ENCODE measurements at regions of chr6 and their contacts with region 1.

Region 1: DNA sequence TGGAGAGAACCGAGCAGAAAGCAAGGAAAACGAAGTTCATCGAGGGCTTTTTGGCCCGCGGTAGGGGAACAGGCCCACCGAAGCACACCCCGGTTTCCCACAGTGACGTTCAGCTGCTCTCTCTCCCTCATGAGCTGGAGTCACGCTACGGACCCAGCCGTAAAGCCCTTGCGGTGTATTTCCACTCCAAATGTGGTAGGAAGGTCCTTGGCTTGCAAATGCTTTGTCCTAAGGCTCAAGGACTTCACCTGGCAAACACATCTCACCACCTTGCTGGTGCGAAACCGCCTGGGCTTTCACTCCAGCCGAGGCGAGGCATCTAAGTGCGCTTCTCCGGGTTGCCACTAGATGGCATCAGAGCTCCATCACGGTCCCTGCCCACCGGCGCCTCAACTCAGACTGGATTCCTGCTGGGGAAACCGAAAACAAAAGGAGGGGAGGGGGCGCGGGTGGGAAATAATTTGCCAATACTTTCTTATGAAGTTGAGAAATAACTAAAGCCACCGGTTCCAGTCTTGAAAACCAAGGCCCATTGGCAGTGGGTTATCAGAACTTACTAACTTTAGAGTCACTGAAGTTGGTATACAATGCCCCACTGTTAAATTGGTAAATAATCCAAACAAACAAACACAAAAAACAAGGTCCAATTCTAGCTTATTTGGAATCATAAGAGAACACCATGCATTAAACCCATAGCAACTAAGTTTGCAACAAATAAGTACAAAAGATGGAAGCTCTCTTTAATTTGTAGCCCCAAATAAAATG is 13.4 kb upstream of the FOXC1 start:
- DNase-seq: peak; percentile 77
- ATAC-seq: peak; percentile 86
- H3K4me3 ChIP-seq: no peak overlapping the region
- H3K4me3 Mint-ChIP-seq: no peak overlapping the region
- H3K27ac ChIP-seq: no peak overlapping the region
- H3K27ac Mint-ChIP-seq: no peak overlapping the region
- H3K4me1 ChIP-seq: peaks cover 3 to 5% of the 10 kb centered on the region in 2 donors
- H3K4me1 Mint-ChIP-seq: no peaks in the 10 kb centered on the region
- H3K27me3 ChIP-seq: peaks cover 0 to 35% (median 17%) of the 10 kb centered on the region in 4 experiments
- H3K27me3 Mint-ChIP-seq: peaks cover 60% of the 10 kb centered on the region
- CTCF ChIP-seq: peak; percentile 97

Region 2: DNA sequence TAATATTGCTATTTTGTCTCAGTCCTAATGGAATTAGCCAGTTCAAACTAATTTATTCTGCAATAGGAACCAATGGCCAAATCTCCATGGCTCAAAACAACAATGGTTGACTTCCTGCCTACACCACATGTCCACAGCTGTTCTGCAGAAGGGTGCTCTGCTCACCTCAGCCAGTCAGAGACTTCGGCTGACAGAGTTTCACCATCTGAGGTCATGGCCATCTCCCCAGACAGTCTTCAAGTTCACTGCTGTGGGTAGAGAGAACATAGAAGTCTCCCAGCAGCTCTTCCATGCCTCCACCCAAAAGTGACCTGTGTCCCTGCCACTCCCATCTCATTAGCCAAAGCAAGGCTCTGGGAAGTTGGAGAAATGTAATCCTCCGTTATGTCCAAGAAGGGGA is 51.7 kb before region 1 on chr6:
- CTCF ChIA-PET with region 1: no interaction called
- POLR2A ChIA-PET with region 1: no interaction called
- intact Hi-C with region 1: no loop called
- DNase-seq: no peak
- ATAC-seq: no peak
- H3K4me3 ChIP-seq: no peak overlapping the region
- H3K4me3 Mint-ChIP-seq: no peak overlapping the region
- H3K27ac ChIP-seq: no peak overlapping the region
- H3K27ac Mint-ChIP-seq: no peak overlapping the region
- H3K4me1 ChIP-seq: no peaks in the 10 kb centered on the region
- H3K4me1 Mint-ChIP-seq: no peaks in the 10 kb centered on the region
- H3K27me3 ChIP-seq: no peaks in the 10 kb centered on the region
- H3K27me3 Mint-ChIP-seq: peaks cover 3% of the 10 kb centered on the region
- CTCF ChIP-seq: no peak

Region 3: GRCh38 chr6:2103644-2104523 is 507.6 kb after region 1 on chr6:
- CTCF ChIA-PET with region 1: interaction called, 19 read pairs
- POLR2A ChIA-PET with region 1: no interaction called
- intact Hi-C with region 1: loop called (anchors 2 kb)
- DNase-seq: peak; percentile 50
- ATAC-seq: peak; percentile 36
- H3K4me3 ChIP-seq: no peak overlapping the region
- H3K4me3 Mint-ChIP-seq: no peak overlapping the region
- H3K27ac ChIP-seq: no peak overlapping the region
- H3K27ac Mint-ChIP-seq: no peak overlapping the region
- H3K4me1 ChIP-seq: no peaks in the 10 kb centered on the region
- H3K4me1 Mint-ChIP-seq: no peaks in the 10 kb centered on the region
- H3K27me3 ChIP-seq: no peaks in the 10 kb centered on the region
- H3K27me3 Mint-ChIP-seq: no peaks in the 10 kb centered on the region
- CTCF ChIP-seq: peak; percentile 77

Region 4: DNA sequence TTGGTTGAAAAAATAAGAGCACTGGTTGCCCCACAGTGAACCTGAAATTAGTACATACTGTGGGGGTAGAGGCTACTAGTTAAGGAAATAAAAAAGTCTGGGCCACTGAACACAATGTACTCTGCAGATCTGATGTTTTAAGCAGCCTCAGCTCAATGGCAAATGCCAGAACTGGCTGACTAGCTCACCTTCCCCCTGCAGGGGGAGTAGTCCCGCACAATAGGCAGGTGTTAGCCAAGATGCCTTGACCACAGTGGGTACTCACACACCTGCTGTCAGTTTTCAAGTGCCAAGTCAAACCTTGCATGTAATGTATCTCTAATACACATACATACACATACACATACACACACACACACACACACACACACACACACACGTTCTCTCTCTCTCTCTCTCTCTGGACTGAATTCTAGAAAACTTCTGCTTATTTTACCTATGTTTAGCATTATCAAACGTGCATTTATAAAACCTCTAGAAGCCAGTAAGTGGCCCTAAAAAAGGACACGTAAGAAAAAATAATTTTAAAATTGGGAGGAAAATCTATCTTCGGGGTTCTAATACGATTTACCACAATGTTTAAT is 613.0 kb after region 1 on chr6:
- CTCF ChIA-PET with region 1: interaction called, 15 read pairs
- POLR2A ChIA-PET with region 1: no interaction called
- intact Hi-C with region 1: no loop called
- DNase-seq: peak; percentile 55
- ATAC-seq: peak; percentile 53
- H3K4me3 ChIP-seq: no peak overlapping the region
- H3K4me3 Mint-ChIP-seq: no peak overlapping the region
- H3K27ac ChIP-seq: no peak overlapping the region
- H3K27ac Mint-ChIP-seq: no peak overlapping the region
- H3K4me1 ChIP-seq: no peaks in the 10 kb centered on the region
- H3K4me1 Mint-ChIP-seq: no peaks in the 10 kb centered on the region
- H3K27me3 ChIP-seq: no peaks in the 10 kb centered on the region
- H3K27me3 Mint-ChIP-seq: no peaks in the 10 kb centered on the region
- CTCF ChIP-seq: peak; percentile 42

Region 5: DNA sequence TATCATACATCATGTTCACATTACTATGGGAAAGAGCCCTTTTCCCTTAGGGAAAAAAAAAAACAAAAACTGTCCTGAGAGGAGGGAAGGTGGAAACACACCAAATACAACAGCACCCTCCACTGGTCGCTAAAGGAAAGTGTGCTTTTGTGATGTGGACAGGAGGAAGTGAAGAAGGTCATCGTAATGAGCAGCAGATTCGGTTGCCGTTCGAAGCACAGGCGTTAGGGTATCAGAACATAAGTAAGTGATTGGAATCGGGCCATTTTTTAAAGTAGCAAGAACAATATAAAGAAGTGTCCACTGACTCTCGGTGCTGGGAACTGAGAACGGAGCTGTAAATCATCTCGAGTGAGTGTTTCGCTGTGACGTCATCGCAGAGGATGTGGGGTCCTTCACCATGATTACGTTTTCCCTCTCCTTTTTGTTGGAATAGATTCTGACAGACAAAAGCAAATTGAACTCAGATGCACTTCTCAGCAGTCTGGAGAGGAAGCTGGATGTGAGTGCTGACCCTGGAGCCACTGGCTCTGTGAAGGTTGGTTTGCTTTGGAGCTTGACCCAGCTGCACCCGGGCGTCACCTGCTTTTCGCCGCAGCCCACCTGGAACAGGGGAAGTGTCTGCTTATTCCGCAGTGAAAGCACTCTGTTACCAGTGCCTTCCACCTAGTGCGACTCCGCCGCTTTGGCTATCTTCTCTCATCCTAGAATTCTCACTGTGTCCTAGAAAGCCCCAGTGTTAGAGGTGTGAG is 852.7 kb after region 1 on chr6:
- CTCF ChIA-PET with region 1: interaction called, 16 read pairs
- POLR2A ChIA-PET with region 1: no interaction called
- intact Hi-C with region 1: loop called (anchors 1 kb)
- DNase-seq: peak; percentile 38
- ATAC-seq: no peak
- H3K4me3 ChIP-seq: peak overlapping the region in 3 of 5 experiments; percentile 4 to 44 (median 33)
- H3K4me3 Mint-ChIP-seq: peak overlapping the region; percentile 62
- H3K27ac ChIP-seq: no peak overlapping the region
- H3K27ac Mint-ChIP-seq: no peak overlapping the region
- H3K4me1 ChIP-seq: no peaks in the 10 kb centered on the region
- H3K4me1 Mint-ChIP-seq: peaks cover 5% of the 10 kb centered on the region
- H3K27me3 ChIP-seq: no peaks in the 10 kb centered on the region
- H3K27me3 Mint-ChIP-seq: peaks cover 15% of the 10 kb centered on the region
- CTCF ChIP-seq: peak; percentile 67

Region 6: DNA sequence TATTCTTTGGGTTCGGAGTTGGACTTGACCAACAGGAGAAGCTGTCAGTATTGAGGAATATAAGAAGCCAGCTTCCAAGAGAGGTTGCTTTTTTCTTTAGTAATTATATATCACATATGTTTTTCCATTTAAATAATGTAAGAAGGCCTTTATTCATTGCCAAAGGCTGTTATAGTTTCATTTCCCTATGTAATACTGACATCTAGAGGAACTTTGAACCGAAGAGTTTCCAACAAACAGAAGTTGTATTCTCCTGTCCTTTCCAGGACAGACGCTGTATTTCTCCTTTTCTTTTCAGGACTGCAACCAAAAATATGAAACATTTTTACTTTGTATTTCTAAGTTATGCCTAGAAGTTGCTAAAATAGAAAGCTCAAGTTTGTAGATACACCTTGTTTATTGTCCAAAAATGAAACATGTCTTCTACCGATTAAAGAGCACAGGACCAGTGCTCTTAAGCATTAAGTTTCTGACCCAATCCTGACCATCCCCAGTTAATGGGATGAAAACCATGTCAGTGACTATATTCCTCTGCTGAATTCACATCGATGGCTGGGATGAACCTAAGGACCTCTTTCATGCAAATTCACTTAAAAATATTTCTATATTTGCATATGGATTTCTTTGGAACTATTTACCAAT is 1099.3 kb after region 1 on chr6:
- CTCF ChIA-PET with region 1: interaction called, 18 read pairs
- POLR2A ChIA-PET with region 1: no interaction called
- intact Hi-C with region 1: loop called (anchors 1 kb)
- DNase-seq: peak; percentile 42
- ATAC-seq: no peak
- H3K4me3 ChIP-seq: no peak overlapping the region
- H3K4me3 Mint-ChIP-seq: no peak overlapping the region
- H3K27ac ChIP-seq: no peak overlapping the region
- H3K27ac Mint-ChIP-seq: no peak overlapping the region
- H3K4me1 ChIP-seq: no peaks in the 10 kb centered on the region
- H3K4me1 Mint-ChIP-seq: no peaks in the 10 kb centered on the region
- H3K27me3 ChIP-seq: no peaks in the 10 kb centered on the region
- H3K27me3 Mint-ChIP-seq: peaks cover 7% of the 10 kb centered on the region
- CTCF ChIP-seq: peak; percentile 66